ENCODE measurements at regions of chr2 and their contacts with region 1.

Region 1: GRCh38 chr2:46062637-46063412 is 234.4 kb upstream of the EPAS1 start:
- DNase-seq: no peak
- ATAC-seq: peak; percentile 93
- H3K4me3 ChIP-seq: no peak overlapping the region
- H3K27ac ChIP-seq: no peak overlapping the region
- H3K4me1 ChIP-seq: no peaks in the 10 kb centered on the region
- H3K27me3 ChIP-seq: no peaks in the 10 kb centered on the region
- CTCF ChIP-seq: peak; percentile 79 to 89 (median 83)
- EP300 ChIP-seq: no peak
- POLR2A ChIP-seq: no peak
- RAD21 ChIP-seq: peak; percentile 89

Region 2: GRCh38 chr2:46010925-46011490 is 51.8 kb before region 1 on chr2:
- CTCF ChIA-PET with region 1: interaction called, 12 read pairs
- POLR2A ChIA-PET with region 1: interaction called, 5 read pairs
- RAD21 ChIA-PET with region 1: interaction called, 7 read pairs
- SMC1A ChIA-PET with region 1: interaction called, 10 read pairs
- in situ Hi-C with region 1: no loop called
- intact Hi-C with region 1: no loop called
- DNase-seq: no peak
- ATAC-seq: peak; percentile 85
- H3K4me3 ChIP-seq: no peak overlapping the region
- H3K27ac ChIP-seq: no peak overlapping the region
- H3K4me1 ChIP-seq: peaks cover 4% of the 10 kb centered on the region; the same call in 1 of the 2 replicates
- H3K27me3 ChIP-seq: no peaks in the 10 kb centered on the region
- CTCF ChIP-seq: peak; percentile 40 to 67 (median 55); a peak in 5 of 6 replicates
- EP300 ChIP-seq: no peak
- POLR2A ChIP-seq: no peak
- RAD21 ChIP-seq: peak; percentile 67

Region 3: GRCh38 chr2:46082521-46083485 is 20.0 kb after region 1 on chr2:
- CTCF ChIA-PET with region 1: interaction called, 56 read pairs
- POLR2A ChIA-PET with region 1: interaction called, 5 read pairs
- RAD21 ChIA-PET with region 1: interaction called, 22 read pairs
- SMC1A ChIA-PET with region 1: interaction called, 57 read pairs
- in situ Hi-C with region 1: no loop called
- intact Hi-C with region 1: no loop called
- DNase-seq: no peak
- ATAC-seq: no peak
- H3K4me3 ChIP-seq: no peak overlapping the region
- H3K27ac ChIP-seq: no peak overlapping the region
- H3K4me1 ChIP-seq: 0 out of 2 replicates have a peak, but pooled peaks cover 3% of the 10 kb centered on the region
- H3K27me3 ChIP-seq: no peaks in the 10 kb centered on the region
- CTCF ChIP-seq: no peak
- EP300 ChIP-seq: no peak
- POLR2A ChIP-seq: no peak
- RAD21 ChIP-seq: no peak

Region 4: DNA sequence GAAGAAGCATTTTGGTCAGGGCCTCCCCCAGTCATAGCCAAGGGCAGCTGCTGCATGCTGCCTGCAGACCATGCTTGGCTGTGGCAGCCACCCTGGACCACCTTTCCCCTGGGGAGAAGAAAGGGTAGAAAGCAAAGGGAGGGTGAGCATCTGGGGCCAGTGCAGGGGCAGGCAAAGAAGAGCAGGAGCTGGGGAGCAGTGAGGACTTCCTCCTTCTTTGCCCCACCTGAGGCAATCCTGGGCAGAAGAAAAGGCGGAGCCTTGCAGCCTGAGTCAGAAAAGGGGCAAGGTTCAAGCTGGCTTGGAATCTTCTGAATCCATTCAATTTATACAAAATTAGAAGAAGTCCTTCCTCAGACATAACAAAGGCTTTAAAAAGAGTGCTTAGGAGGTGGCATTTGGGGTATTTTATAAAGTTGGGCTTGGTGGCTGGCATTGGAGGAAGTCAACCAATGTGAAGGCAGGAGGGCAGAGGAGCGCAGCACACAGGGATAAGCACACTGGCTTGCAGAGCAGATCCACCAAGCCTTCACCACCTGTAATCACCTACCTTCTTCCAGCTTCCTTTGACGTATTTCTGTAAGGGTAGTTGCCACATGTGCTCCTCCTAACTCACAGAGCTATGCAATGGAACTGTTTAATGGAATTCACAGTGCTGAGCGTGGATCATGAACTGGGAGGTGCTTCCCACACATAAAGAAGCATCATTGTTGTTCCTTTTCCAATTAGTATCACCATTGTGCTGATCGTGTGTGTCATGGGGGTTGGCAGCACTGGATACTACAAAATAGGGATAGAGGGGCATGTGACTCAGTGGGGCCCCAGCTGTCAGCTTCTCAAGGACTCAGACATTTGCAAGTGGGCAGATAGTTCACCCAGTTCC is 80.0 kb after region 1 on chr2:
- CTCF ChIA-PET with region 1: interaction called, 13 read pairs
- POLR2A ChIA-PET with region 1: no interaction called
- RAD21 ChIA-PET with region 1: no interaction called
- SMC1A ChIA-PET with region 1: no interaction called
- in situ Hi-C with region 1: no loop called
- intact Hi-C with region 1: no loop called
- DNase-seq: no peak
- ATAC-seq: no peak
- H3K4me3 ChIP-seq: no peak overlapping the region
- H3K27ac ChIP-seq: no peak overlapping the region
- H3K4me1 ChIP-seq: no peaks in the 10 kb centered on the region
- H3K27me3 ChIP-seq: no peaks in the 10 kb centered on the region
- CTCF ChIP-seq: no peak
- EP300 ChIP-seq: no peak
- POLR2A ChIP-seq: no peak
- RAD21 ChIP-seq: no peak

Region 5: GRCh38 chr2:46296840-46297545 is 234.2 kb after region 1 on chr2 and contains the start of gene EPAS1:
- CTCF ChIA-PET with region 1: interaction called, 19 read pairs
- POLR2A ChIA-PET with region 1: no interaction called
- RAD21 ChIA-PET with region 1: interaction called, 18 read pairs
- SMC1A ChIA-PET with region 1: interaction called, 14 read pairs
- in situ Hi-C with region 1: no loop called
- intact Hi-C with region 1: loop called (anchors 5 kb)
- DNase-seq: peak; percentile 8
- ATAC-seq: peak; percentile 88
- H3K4me3 ChIP-seq: peak within 1 kb of the TSS; percentile 76
- H3K27ac ChIP-seq: no peak within 1 kb of the TSS
- H3K4me1 ChIP-seq: peaks cover 8% of the 10 kb centered on the region
- H3K27me3 ChIP-seq: peaks cover 5 to 30% of the 10 kb centered on the region in 2 experiments
- CTCF ChIP-seq: no peak
- EP300 ChIP-seq: no peak
- POLR2A ChIP-seq: no peak; the same call in 1 of the 2 replicates
- RAD21 ChIP-seq: no peak
- polyA plus RNA-seq, gene EPAS1: 0.11 TPM in 1 of 2 experiments, not detected in the other

Region 6: DNA sequence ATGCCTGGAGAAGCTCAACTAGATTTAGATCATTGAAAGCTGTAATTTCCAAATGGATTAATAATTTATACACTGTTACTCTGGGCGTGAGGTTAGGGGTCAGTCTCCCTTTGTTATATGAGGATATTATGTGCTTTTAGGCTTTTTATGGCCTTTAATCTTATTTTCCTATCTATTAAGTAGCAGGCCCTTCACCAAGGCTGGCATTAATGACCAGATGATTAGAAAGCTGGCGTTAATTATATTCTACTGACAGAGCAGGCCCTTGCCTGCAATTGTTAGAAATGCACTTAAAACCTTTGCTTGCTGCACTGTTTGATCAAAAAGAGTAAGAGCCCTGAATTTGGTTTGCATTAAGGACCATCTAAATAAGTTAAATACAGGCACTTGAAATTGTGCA is 309.6 kb after region 1 on chr2:
- CTCF ChIA-PET with region 1: interaction called, 45 read pairs
- POLR2A ChIA-PET with region 1: no interaction called
- RAD21 ChIA-PET with region 1: interaction called, 34 read pairs
- SMC1A ChIA-PET with region 1: interaction called, 24 read pairs
- in situ Hi-C with region 1: no loop called
- intact Hi-C with region 1: no loop called
- DNase-seq: no peak
- ATAC-seq: no peak
- H3K4me3 ChIP-seq: no peak overlapping the region
- H3K27ac ChIP-seq: no peak overlapping the region
- H3K4me1 ChIP-seq: no peaks in the 10 kb centered on the region
- H3K27me3 ChIP-seq: peaks cover 0 to 6% of the 10 kb centered on the region in 2 experiments; a peak in 2 of 4 replicates
- CTCF ChIP-seq: no peak
- EP300 ChIP-seq: no peak
- POLR2A ChIP-seq: no peak
- RAD21 ChIP-seq: no peak